ENCODE measurements at regions of chr2 and their contacts with region 1.

Region 1: GRCh38 chr2:156589381-156590079 is 153.4 kb downstream of the GPD2 start:
- DNase-seq: peak; percentile 72
- H3K4me3 ChIP-seq: 0 out of 2 replicates have a peak overlapping the region, but pooled peaks have one; percentile 20
- H3K27ac ChIP-seq: no peak overlapping the region
- H3K4me1 ChIP-seq: peaks cover 3% of the 10 kb centered on the region
- H3K27me3 ChIP-seq: no peaks in the 10 kb centered on the region

Region 2: GRCh38 chr2:155377266-155377680 is 1212.3 kb before region 1 on chr2:
- in situ Hi-C with region 1: loop called (anchors 25 kb)
- DNase-seq: peak; percentile 43
- H3K4me3 ChIP-seq: no peak overlapping the region
- H3K27ac ChIP-seq: no peak overlapping the region
- H3K4me1 ChIP-seq: no peaks in the 10 kb centered on the region
- H3K27me3 ChIP-seq: no peaks in the 10 kb centered on the region

Region 3: GRCh38 chr2:156505696-156506095 is 83.8 kb before region 1 on chr2:
- in situ Hi-C with region 1: no loop called
- DNase-seq: no peak
- H3K4me3 ChIP-seq: no peak overlapping the region
- H3K27ac ChIP-seq: no peak overlapping the region
- H3K4me1 ChIP-seq: no peaks in the 10 kb centered on the region
- H3K27me3 ChIP-seq: no peaks in the 10 kb centered on the region

Region 4: DNA sequence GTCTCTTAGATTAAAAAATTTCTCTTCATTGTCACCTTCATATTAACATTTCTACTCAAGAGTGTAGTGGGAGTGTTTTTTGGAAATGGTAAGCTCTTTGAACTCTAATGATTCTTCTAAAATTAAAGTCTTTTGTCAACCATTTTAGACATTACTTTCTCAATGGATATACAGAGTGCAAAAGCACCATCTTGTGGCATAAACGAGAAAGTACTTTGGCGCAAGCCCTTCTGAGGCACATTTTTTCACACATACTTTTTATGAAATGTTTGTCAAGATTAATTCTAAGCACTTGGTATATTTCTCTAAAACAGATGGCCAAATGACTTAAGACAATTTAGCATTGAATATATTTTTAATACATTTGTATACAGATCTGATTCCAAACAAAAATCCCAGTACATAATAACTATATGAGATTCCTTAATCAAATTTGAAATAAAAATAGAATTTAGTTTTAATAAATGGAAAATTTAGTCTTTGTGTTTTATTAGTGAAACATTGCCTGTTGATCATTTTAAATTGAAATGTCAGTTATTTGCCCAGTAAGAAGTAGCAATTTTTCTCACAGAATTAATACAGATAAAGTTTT is 604.7 kb after region 1 on chr2:
- in situ Hi-C with region 1: loop called (anchors 25 kb)
- DNase-seq: peak; percentile 80
- H3K4me3 ChIP-seq: no peak overlapping the region
- H3K27ac ChIP-seq: no peak overlapping the region
- H3K4me1 ChIP-seq: peaks cover 35% of the 10 kb centered on the region
- H3K27me3 ChIP-seq: no peaks in the 10 kb centered on the region

Region 5: DNA sequence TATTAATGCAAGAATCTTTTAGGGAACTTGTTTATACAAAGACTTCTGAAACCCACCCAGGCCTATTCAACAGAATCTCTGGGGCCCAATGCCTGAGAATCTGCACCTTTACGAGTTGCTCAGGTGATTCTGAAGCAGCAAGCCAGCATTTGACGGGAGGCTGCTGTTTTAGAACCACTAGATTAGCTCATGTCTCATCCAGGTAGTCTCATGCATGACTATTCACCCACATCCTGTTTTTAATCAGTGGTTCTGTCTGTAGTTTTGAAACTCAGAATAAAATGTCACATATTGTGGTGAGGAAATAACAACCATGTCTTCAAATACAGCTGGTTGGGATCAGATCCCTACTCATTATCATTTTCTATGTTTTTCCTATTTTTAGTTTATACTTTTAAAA is 814.8 kb after region 1 on chr2:
- in situ Hi-C with region 1: no loop called
- DNase-seq: peak; percentile 3
- H3K4me3 ChIP-seq: no peak overlapping the region
- H3K27ac ChIP-seq: no peak overlapping the region
- H3K4me1 ChIP-seq: no peaks in the 10 kb centered on the region
- H3K27me3 ChIP-seq: no peaks in the 10 kb centered on the region; the same call in 1 of the 2 replicates

Measured in GM23248 (cell line).